Dendritic cell treated with granulocyte-macrophage colony-stimulating factor and Interleukin-4, amounts not matched to agents 40 ng/mL and 50 ng/mL, for 4 days (primary cell): ENCODE measurements at regions of chr9 and their contacts with region 1.

Region 1: GRCh38 chr9:134407123-134407808 is 81.0 kb downstream of the RXRA start:
- H3K4me3 Mint-ChIP-seq: peak overlapping the region; percentile 67
- H3K27ac Mint-ChIP-seq: peak overlapping the region; percentile 96
- H3K4me1 Mint-ChIP-seq: peaks cover 100% of the 10 kb centered on the region
- H3K27me3 Mint-ChIP-seq: no peaks in the 10 kb centered on the region

Region 2: DNA sequence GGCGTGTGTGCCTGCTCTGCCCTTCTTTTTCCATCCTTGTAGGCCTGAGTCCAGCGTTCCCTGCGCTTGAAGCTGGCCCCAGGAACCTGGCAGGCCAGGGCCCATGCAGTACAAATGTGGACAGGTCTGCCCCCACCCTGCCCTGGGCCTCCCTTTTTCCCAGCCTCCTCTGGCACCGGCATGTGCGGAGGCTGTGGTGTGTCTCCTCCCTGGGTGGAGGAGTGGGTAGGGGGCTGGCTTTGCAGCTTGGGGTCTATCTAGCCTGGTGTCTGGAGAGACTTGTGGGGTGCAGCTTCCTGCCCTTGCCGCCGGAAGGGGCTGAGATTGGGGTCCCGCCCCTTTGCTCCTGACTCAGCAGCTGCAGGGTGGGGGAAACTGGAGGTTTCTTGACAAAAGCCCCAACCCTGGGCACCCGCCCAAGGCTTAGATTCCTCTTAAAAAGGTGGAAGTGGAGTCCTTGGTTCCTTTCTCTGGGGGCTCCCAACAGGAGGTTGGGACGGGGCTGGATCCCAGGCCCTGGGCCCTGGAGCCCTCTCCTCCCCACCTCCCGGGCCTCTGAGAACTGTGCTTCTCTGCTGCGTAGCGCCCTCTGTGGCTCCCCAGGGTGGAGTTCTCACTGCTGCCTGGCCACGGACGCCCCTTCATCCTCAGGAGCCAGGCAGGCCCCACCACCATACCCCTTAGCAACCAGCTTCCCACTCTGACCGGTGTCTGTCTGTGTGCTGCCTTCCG is 63.0 kb before region 1 on chr9:
- intact Hi-C with region 1: loop called (anchors 10 kb)
- H3K4me3 Mint-ChIP-seq: peak overlapping the region; percentile 62
- H3K27ac Mint-ChIP-seq: no peak overlapping the region
- H3K4me1 Mint-ChIP-seq: no peaks in the 10 kb centered on the region
- H3K27me3 Mint-ChIP-seq: no peaks in the 10 kb centered on the region

Region 3: DNA sequence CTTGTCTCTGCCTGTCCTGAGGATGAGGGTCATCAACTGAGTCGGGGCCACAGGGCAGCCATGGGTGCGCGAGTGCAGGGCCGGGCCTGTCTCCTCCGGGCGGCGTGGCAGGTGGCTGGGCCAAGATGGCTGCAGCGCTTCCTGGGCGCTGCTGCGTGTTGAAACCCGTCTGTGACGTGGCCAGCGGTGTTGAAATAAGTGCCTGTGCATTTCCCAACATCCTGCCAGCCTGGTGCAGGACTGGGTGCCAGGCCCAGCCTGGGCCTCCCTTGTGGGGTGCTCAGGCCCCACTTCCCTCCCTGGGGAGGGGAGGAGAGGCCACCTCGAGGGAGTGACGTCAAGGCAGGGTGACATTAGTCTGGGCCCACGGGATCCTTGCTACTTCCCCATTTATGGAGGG is 35.5 kb before region 1 on chr9:
- intact Hi-C with region 1: loop called (anchors 2 kb)
- H3K4me3 Mint-ChIP-seq: peak overlapping the region; percentile 77
- H3K27ac Mint-ChIP-seq: peak overlapping the region; percentile 96
- H3K4me1 Mint-ChIP-seq: peaks cover 94% of the 10 kb centered on the region
- H3K27me3 Mint-ChIP-seq: no peaks in the 10 kb centered on the region

Region 4: DNA sequence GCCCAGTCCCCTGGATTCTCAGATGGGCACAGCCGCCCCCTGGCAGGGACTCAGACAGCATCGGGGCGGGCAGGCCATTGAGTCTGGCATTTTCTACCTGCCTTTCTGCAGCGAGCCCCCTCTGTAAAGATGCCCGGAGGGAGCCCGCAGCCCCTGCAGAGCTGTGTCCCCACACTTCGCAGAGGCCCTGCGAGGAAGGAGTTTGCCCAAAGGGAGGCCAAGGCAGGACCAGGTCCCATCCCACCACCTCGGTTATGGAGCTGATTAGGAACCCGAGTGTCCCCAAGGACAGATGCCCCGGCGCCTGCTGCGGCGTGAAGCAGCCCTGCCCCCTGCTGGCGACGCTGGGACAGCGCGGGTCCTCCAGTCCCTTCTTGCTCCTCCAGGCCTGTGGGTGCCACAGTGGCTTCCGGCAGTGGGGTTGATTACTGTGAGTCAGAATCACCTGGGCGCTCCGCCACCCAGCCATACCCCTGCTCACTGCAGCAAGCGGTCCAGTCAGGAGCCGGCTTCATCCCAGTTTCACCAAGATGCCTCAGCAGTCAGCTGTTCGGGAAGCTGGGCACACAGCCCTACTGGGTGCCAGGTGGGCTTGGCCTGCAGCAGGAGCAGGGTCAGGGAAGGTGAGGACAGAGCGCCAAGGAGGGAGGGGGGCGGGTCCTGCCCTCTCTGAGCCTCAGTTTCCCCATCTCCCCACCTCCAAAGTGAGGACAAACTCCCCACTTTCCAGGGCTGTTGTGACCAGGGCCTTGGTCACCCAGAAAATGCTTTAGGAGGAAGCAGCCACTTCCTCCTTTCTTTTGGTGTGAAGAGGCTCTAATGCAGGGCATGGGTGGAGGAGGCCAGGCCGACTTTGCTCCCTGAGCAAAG is 36.1 kb after region 1 on chr9:
- intact Hi-C with region 1: loop called (anchors 5 kb)
- H3K4me3 Mint-ChIP-seq: no peak overlapping the region
- H3K27ac Mint-ChIP-seq: peak overlapping the region; percentile 81
- H3K4me1 Mint-ChIP-seq: peaks cover 57% of the 10 kb centered on the region
- H3K27me3 Mint-ChIP-seq: peaks cover 9% of the 10 kb centered on the region